Right ventricle myocardium inferior (tissue), 1 donor: ENCODE measurements at regions of chr1 and their contacts with region 1.

Region 1: GRCh38 chr1:94801919-94802546 is 18.1 kb upstream of the SLC44A3 start:
- DNase-seq: no peak
- ATAC-seq: peak; percentile 77

Region 2: DNA sequence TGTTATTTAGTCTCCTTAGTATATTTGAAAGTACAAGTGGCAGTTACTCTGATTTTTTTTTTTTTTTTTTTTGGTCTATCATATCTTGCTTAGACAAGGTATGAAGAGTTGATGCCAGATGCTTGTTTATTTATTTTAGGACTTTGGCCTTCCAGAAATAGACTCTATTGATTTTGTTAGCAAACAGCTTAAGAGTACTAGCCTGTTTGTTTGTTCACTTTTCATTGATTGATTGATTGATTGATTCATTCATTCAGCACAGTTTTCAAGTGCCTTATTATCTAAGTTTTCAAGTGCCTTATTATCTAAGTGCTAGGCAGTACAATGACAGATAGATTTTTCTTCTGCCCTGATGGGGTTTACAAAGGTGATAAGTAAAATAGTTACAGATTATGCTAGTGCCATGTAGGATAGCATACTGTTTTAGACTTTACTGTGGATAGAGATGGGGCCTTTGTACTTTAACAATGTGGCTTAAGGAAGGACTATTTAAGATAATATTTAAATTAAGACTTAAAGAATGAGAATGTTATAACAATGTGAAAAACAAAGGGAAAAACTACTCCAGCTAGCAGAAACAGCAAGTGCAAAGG is 1672.4 kb before region 1 on chr1:
- intact Hi-C with region 1: no loop called
- DNase-seq: no peak
- ATAC-seq: no peak

Region 3: GRCh38 chr1:94481473-94481933 is 320.5 kb before region 1 on chr1:
- intact Hi-C with region 1: loop called (anchors 1 kb)
- DNase-seq: no peak
- ATAC-seq: peak; percentile 80

Region 4: GRCh38 chr1:94522304-94522703 is 279.7 kb before region 1 on chr1:
- intact Hi-C with region 1: loop called (anchors 2 kb)
- DNase-seq: no peak
- ATAC-seq: no peak

Region 5: GRCh38 chr1:94541175-94542087 is 260.6 kb before region 1 on chr1 and contains the start of gene F3:
- intact Hi-C with region 1: loop called (anchors 5 kb)
- DNase-seq: peak; percentile 92
- ATAC-seq: peak; percentile 93
- total RNA-seq, gene F3: 27.9 TPM

Region 6: GRCh38 chr1:94599095-94599813 is 202.8 kb before region 1 on chr1:
- intact Hi-C with region 1: loop called (anchors 5 kb)
- DNase-seq: no peak
- ATAC-seq: peak; percentile 83

Region 7: GRCh38 chr1:94658221-94658620 is 143.8 kb before region 1 on chr1:
- intact Hi-C with region 1: loop called (anchors 5 kb)
- DNase-seq: no peak
- ATAC-seq: peak; percentile 96

Region 8: DNA sequence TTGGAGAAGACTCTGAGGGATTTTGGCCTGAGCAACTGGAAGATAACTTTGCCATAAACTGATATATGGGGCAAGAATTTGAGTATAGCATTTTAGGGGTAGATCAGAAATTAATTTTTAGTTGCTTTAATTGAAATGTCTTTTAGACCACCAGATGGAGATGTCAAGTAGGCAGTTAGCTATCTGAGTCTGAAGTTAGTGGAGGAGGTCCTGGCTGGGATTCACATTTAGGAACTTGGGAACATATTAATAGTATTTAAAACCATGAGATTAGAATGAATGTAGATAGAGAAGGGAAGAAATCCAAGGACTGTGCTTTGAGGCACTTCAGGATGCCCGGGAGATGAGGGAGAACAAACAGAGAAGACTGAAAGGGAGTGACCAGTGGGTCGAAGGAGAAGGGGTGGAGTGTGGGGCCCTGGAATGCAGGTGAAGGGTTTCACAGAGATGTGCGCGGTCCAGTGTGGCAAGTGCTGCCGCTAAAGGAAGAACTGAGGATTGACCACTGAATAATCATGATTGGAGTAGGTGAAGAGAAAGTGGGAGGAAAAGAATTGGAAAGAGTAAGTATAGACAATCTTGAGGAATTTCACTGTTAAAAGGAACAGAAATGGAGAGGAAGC is 50.9 kb after region 1 on chr1:
- intact Hi-C with region 1: no loop called
- DNase-seq: no peak
- ATAC-seq: no peak

Region 9: GRCh38 chr1:94873522-94874351 is 71.7 kb after region 1 on chr1:
- intact Hi-C with region 1: no loop called
- DNase-seq: no peak
- ATAC-seq: peak; percentile 81

Region 10: DNA sequence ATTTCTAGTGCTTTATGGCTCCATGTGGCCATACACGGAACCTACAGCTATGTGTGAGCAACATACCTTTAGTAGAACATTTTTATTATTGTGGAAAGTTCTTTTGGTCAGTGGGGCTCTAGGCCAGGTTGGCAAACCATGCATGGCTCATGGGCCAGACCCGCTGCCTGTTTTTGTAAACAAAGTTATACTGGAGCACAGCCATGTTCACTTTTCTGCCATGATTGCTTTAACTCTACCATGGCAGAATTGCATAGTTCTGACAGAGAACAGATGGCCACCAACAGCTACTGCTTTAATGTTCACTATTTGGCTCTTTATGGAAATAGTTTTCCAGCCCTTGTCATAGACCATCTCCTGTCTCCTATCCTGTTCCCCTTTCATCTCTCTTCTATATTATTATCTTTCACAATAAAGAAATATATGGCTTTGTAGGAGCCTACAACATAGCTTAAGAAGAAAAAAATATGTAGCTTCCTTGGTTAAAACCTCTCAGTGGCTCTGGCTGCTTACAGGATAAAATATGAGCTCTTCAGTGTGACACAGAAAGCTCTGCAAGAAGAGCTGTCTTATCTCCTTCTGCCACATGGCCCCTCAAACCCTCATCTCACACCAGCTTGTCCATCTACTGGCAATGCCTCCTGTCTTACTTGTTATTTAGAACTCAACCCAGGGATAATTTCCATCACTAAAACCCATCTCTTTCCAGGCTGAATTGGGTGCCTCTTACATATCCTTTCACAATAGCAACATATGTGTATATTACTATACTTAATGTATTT is 377.4 kb after region 1 on chr1:
- intact Hi-C with region 1: no loop called
- DNase-seq: no peak
- ATAC-seq: peak; percentile 59